Activated naive CD4-positive, alpha-beta T cell treated with anti-CD3 and anti-CD28 coated beads for 36 hours (primary cell): ENCODE measurements at regions of chr13 and their contacts with region 1.

Region 1: GRCh38 chr13:108269601-108270328 is at the start of gene TNFSF13B:
- DNase-seq: peak; percentile 68
- H3K4me3 Mint-ChIP-seq: peak within 1 kb of the TSS; percentile 75
- H3K27ac Mint-ChIP-seq: peak within 1 kb of the TSS; percentile 81
- H3K4me1 Mint-ChIP-seq: peaks cover 55% of the 10 kb centered on the region
- H3K27me3 Mint-ChIP-seq: no peaks in the 10 kb centered on the region
- total RNA-seq, gene TNFSF13B: 2.0 to 2.6 TPM

Region 2: GRCh38 chr13:106917673-106918556 is 1351.8 kb before region 1 on chr13:
- CTCF ChIA-PET with region 1: no interaction called
- intact Hi-C with region 1: loop called (anchors 10 kb)
- DNase-seq: peak; percentile 73
- H3K4me3 Mint-ChIP-seq: peak overlapping the region; percentile 72
- H3K27ac Mint-ChIP-seq: no peak overlapping the region
- H3K4me1 Mint-ChIP-seq: peaks cover 7% of the 10 kb centered on the region
- H3K27me3 Mint-ChIP-seq: peaks cover 44% of the 10 kb centered on the region

Region 3: DNA sequence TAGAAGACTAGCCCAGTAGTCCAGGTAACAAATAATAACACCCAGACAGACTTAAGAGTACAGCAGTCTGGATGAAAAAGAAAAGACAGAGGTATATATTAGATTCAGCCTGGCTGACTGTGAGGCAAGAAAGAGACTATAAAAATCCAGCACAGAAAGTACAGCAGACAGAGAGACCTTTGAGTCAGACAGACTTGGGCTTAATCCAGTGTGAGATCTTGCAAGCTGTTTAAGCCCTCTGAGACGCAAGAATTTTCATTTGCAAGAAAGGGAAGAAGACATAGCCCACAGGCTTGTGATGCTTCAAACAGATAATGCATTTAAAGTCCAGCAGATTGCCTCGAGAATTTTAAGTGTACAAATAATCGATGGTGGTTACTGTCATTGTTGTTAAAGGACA is 525.8 kb before region 1 on chr13:
- CTCF ChIA-PET with region 1: no interaction called
- intact Hi-C with region 1: no loop called
- DNase-seq: no peak
- H3K4me3 Mint-ChIP-seq: no peak overlapping the region
- H3K27ac Mint-ChIP-seq: no peak overlapping the region
- H3K4me1 Mint-ChIP-seq: no peaks in the 10 kb centered on the region
- H3K27me3 Mint-ChIP-seq: no peaks in the 10 kb centered on the region

Region 4: DNA sequence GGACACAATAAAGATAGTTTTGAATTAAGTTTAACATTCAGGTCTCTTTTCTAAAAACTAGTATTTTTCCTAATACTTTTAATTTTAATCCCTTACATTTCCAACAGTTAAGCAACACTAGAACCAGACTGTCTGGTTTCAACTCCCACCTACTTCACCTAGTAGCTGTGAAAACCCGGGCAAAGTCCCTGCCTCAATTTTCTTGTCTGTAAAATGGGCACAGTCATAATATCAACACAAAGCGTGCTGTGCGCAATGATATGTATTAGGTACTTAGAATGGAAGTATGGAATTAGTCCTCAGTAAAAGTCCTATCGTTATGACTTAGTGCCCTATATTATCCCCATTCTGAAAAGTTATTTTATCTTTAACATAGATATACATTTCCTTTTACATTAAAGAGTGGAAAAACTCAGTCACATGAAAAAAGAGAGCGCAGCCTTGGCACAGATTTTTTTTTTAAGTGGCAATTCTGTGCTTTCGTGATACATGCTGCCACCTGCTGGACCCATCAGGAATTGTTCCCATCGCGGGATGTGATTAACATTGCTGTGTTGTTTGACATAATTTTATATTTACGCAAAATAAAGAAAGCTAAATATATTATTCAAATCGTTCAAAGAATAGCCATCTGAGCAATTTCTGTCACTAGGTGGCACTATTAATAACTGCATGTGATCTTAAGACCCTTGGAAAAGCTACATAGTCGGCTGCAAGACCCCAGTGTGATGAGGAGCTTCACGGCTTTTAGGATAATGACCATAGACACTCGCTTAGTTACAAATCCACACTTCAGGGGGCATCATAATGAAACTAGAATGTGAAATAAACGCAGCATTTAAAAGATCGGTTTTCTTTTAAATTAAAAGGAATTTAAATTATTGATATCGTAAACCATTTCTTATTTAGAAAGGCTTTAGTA is 114.3 kb before region 1 on chr13:
- CTCF ChIA-PET with region 1: no interaction called
- intact Hi-C with region 1: no loop called
- DNase-seq: peak; percentile 74
- H3K4me3 Mint-ChIP-seq: no peak overlapping the region
- H3K27ac Mint-ChIP-seq: no peak overlapping the region
- H3K4me1 Mint-ChIP-seq: no peaks in the 10 kb centered on the region
- H3K27me3 Mint-ChIP-seq: peaks cover 13% of the 10 kb centered on the region

Region 5: GRCh38 chr13:108227651-108228272 is 42.0 kb before region 1 on chr13:
- CTCF ChIA-PET with region 1: no interaction called
- intact Hi-C with region 1: loop called (anchors 2 kb)
- DNase-seq: peak; percentile 45
- H3K4me3 Mint-ChIP-seq: no peak overlapping the region
- H3K27ac Mint-ChIP-seq: no peak overlapping the region
- H3K4me1 Mint-ChIP-seq: peaks cover 49% of the 10 kb centered on the region
- H3K27me3 Mint-ChIP-seq: no peaks in the 10 kb centered on the region

Region 6: GRCh38 chr13:108342369-108343289 is 72.9 kb after region 1 on chr13:
- CTCF ChIA-PET with region 1: no interaction called
- intact Hi-C with region 1: loop called (anchors 1 kb)
- DNase-seq: peak; percentile 28
- H3K4me3 Mint-ChIP-seq: peak overlapping the region; percentile 4
- H3K27ac Mint-ChIP-seq: peak overlapping the region; percentile 56
- H3K4me1 Mint-ChIP-seq: peaks cover 24% of the 10 kb centered on the region
- H3K27me3 Mint-ChIP-seq: no peaks in the 10 kb centered on the region

Region 7: GRCh38 chr13:108427355-108427754 is 157.6 kb after region 1 on chr13:
- CTCF ChIA-PET with region 1: no interaction called
- intact Hi-C with region 1: no loop called
- DNase-seq: no peak
- H3K4me3 Mint-ChIP-seq: no peak overlapping the region
- H3K27ac Mint-ChIP-seq: no peak overlapping the region
- H3K4me1 Mint-ChIP-seq: peaks cover 6% of the 10 kb centered on the region
- H3K27me3 Mint-ChIP-seq: no peaks in the 10 kb centered on the region

Region 8: GRCh38 chr13:108787700-108788414 is 518.1 kb after region 1 on chr13:
- CTCF ChIA-PET with region 1: no interaction called
- intact Hi-C with region 1: no loop called
- DNase-seq: no peak
- H3K4me3 Mint-ChIP-seq: no peak overlapping the region
- H3K27ac Mint-ChIP-seq: no peak overlapping the region
- H3K4me1 Mint-ChIP-seq: no peaks in the 10 kb centered on the region
- H3K27me3 Mint-ChIP-seq: peaks cover 11% of the 10 kb centered on the region

Region 9: DNA sequence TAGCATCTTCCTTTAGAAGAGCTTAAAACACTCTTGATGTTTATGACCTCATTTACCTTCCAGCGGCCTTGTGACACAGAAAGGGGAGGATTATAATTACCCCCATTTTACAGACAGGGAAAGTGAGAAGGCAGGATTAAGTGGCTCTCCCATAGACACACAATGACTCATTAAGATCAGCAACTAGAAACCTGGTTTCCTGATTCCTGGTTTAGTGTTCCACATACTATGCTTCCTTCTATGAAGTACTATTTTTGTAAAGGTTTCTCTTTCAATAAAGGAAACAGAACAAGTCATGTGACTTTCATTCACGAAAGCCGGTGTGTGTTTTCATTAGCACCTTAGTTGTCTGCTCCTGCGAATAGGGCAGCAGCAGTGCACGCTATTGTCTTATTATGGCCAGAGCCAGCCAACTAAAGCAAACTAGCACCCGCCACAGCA is 1508.4 kb after region 1 on chr13:
- CTCF ChIA-PET with region 1: no interaction called
- intact Hi-C with region 1: loop called (anchors 2 kb)
- DNase-seq: peak; percentile 21
- H3K4me3 Mint-ChIP-seq: peak overlapping the region; percentile 27
- H3K27ac Mint-ChIP-seq: peak overlapping the region; percentile 24
- H3K4me1 Mint-ChIP-seq: peaks cover 59% of the 10 kb centered on the region
- H3K27me3 Mint-ChIP-seq: no peaks in the 10 kb centered on the region